Testis (tissue), 5 donors: ENCODE measurements at regions of chr3 and their contacts with region 1.

Region 1: DNA sequence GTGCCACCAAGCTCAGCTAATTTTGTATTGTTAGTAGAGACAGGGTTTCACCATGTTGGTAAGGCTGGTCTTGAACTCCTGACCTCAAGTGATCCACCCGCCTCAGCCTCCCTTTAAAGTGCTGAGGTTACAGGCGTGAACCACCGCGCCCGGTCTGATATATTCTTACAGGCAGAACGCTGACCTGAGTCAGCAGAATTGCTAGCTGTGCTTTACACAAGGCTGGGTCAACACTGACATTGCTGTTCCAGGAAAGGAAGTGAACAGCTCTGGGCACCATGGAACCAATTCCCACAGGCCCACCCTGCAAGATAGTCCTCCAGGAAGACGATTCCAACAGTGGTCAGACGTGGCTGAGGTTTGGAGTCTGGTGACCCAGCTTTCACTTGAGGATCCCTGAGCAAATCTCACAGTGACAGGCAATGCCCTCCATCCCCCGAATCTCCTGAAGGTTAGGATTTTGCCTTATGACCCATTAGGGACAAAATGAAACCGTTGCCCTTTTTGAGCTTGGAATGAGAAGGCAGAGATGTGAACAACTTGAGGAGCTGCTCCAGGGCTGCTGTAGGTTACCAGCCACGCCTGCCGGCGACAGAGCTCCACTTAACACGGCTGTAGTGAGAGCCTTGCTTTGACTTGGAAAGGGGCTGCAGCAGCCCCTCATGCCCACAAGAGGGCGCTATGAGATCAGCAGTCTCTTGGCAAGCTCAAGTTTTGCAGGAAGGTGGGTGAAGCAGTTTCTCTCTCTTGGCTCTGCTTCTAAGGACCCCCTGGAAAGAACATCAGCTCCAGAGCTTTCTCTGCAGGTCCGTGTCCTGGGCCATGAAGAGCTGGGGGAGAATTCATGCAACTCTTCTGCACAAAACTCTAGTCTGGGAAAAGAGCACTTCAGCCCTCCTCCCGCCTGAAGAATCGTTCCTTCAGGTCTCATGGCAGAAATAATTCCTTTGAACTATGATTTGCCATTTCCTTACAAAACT is 74.1 kb downstream of the SENP2 start:
- DNase-seq: peak; percentile 88
- H3K4me3 ChIP-seq: no peak overlapping the region
- H3K27ac ChIP-seq: peak overlapping the region in 1 of 2 donors; percentile 86
- H3K4me1 ChIP-seq: peaks cover 30% of the 10 kb centered on the region
- H3K27me3 ChIP-seq: no peaks in the 10 kb centered on the region
- CTCF ChIP-seq: peak; percentile 72 to 96 (median 88)
- POLR2A ChIP-seq: no peak

Region 2: DNA sequence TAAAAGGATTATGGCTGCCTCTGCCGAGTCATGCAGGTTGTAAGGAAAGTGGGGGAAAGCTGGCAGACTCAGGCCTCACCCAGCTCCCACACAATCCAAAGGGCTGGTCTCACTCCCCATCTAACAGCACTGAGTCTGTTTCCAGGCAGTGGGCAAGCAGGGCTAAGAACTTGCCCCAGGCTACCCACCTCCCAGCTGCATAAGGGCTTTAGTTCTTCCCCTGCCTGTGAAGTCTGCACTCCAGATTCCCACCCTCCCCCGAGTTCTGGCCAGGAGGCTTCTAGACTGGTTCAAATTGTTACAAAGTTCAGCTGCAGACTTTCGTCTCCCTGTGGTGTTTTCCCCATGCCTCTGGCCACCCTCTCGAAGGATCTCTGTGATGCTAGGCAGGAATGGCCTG is 417.6 kb before region 1 on chr3:
- intact Hi-C with region 1: no loop called
- DNase-seq: no peak
- H3K4me3 ChIP-seq: no peak overlapping the region
- H3K27ac ChIP-seq: no peak overlapping the region
- H3K4me1 ChIP-seq: no peaks in the 10 kb centered on the region
- H3K27me3 ChIP-seq: no peaks in the 10 kb centered on the region
- CTCF ChIP-seq: no peak
- POLR2A ChIP-seq: no peak

Region 3: GRCh38 chr3:185764163-185764979 is 104.1 kb after region 1 on chr3:
- intact Hi-C with region 1: loop called (anchors 10 kb)
- DNase-seq: no peak
- H3K4me3 ChIP-seq: no peak overlapping the region
- H3K27ac ChIP-seq: no peak overlapping the region
- H3K4me1 ChIP-seq: peaks cover 9% of the 10 kb centered on the region
- H3K27me3 ChIP-seq: no peaks in the 10 kb centered on the region
- CTCF ChIP-seq: no peak
- POLR2A ChIP-seq: no peak